ENCODE measurements at regions of chr15 and their contacts with region 1.

Region 1: DNA sequence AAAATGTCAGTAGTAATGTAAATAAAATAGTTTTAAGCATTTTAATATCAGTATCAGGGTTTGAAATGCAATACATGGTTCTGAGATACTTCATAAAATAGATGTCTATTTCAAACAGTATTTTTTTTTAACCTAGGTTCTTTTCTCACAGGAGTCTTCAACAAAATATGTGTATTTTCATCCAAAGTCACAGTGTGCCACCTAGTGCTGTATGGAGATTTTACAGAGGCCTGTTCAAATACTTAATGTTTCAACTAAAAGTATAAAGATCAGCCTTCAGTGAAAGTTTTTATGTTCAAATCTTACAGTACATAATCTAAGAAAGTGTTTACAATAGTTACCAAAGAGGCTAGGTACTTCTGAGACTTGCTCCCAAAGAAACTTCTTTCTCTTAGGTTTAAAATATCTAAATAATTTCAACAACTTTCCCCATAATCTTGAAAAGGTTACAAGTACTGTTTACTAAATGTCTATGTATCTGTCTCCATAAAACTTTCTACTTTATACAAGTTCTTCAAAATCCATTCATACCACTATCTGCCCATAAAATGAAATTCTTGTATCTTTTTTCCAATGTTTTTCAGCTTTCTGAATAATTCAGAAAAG is 38.3 kb downstream of the SCAPER start:
- DNase-seq: peak; percentile 58
- ATAC-seq: peak; percentile 82
- H3K4me3 ChIP-seq: no peak overlapping the region
- H3K27ac ChIP-seq: no peak overlapping the region
- H3K4me1 ChIP-seq: no peaks in the 10 kb centered on the region
- H3K27me3 ChIP-seq: no peaks in the 10 kb centered on the region
- CTCF ChIP-seq: peak; percentile 76
- POLR2A ChIP-seq: no peak
- RAD21 ChIP-seq: peak; percentile 81

Region 2: DNA sequence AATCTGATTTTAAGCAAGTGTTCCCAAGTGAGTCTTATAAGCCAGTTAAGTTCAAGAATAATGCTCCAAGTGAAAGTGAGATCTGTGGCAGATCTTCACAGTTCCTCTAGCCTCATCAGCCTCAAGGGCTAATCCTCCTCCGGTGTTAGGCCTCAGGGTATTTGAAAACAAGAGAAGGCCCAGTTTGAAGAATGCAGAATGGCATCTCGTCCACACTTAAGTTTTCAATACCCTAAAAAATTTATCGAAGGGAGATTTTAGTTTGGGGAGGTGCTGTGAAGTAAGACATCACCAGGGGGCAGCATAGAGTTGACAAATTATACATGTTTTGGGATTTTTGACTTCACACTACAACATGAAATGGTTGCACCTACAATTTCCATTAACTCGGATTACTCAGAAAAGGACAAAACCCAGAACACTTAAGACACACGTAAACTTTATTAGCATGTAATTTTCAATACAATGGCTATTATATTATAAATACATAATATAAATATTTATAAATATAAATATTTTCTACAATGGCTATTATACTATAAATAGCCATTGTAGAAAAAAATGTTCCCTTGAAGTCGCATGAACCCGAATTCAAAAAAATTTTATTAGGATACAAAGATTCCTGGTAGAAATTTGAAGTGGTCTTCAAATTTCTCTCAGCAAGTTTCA is 809.4 kb before region 1 on chr15:
- CTCF ChIA-PET with region 1: no interaction called
- POLR2A ChIA-PET with region 1: no interaction called
- dilution Hi-C with region 1: no loop called
- in situ Hi-C with region 1: no loop called
- intact Hi-C with region 1: loop called (anchors 5 kb)
- DNase-seq: peak; percentile 22
- ATAC-seq: 0 out of 2 replicates have a peak, but pooled peaks have one; percentile 19
- H3K4me3 ChIP-seq: peak overlapping the region; percentile 23; the same call in 1 of the 2 replicates
- H3K27ac ChIP-seq: no peak overlapping the region
- H3K4me1 ChIP-seq: peaks cover 1% of the 10 kb centered on the region; the same call in 1 of the 2 replicates
- H3K27me3 ChIP-seq: peaks cover 47% of the 10 kb centered on the region
- CTCF ChIP-seq: peak; percentile 70
- POLR2A ChIP-seq: no peak
- RAD21 ChIP-seq: peak; percentile 49

Region 3: GRCh38 chr15:76190834-76191538 is 675.8 kb before region 1 on chr15:
- CTCF ChIA-PET with region 1: interaction called, 5 read pairs
- POLR2A ChIA-PET with region 1: no interaction called
- dilution Hi-C with region 1: no loop called
- in situ Hi-C with region 1: loop called (anchors 10 kb)
- intact Hi-C with region 1: loop called (anchors 1 kb)
- DNase-seq: peak; percentile 62
- ATAC-seq: peak; percentile 95
- H3K4me3 ChIP-seq: peak overlapping the region; percentile 14; the same call in 1 of the 2 replicates
- H3K27ac ChIP-seq: no peak overlapping the region
- H3K4me1 ChIP-seq: peaks cover 9% of the 10 kb centered on the region
- H3K27me3 ChIP-seq: no peaks in the 10 kb centered on the region; the same call in 1 of the 2 replicates
- CTCF ChIP-seq: peak; percentile 92
- POLR2A ChIP-seq: no peak
- RAD21 ChIP-seq: peak; percentile 93

Region 4: DNA sequence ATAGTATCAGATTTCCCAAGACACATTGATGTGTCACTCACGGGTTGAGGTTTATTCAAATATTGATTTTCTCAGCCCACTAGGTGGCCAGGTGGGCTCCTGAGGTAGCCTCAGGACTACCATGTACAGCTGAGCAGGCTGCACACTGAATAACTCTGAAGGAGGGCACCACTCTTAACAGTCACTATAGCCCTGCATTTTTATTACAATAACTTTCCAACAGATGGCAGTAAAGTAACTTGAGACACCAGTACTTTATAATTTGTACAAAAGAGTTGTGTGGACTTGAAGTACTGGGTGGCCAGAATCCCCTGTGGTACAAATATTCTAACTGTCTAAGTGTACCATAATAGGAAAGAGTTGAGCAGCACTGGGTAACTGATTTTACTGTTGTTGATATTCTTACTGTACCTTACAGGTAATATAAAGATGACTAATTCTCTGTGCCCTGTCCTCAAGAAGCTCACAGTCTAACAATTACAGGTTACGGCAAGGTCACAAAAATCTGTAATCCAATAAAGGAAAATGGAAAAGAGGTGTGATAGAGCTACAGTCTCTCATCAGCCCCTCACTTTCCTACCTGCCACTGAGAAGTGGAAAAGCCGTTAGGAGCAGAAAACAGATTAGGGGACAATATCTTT is 631.5 kb before region 1 on chr15:
- CTCF ChIA-PET with region 1: no interaction called
- POLR2A ChIA-PET with region 1: no interaction called
- dilution Hi-C with region 1: no loop called
- in situ Hi-C with region 1: loop called (anchors 10 kb)
- intact Hi-C with region 1: loop called (anchors 1 kb)
- DNase-seq: peak; percentile 53
- ATAC-seq: peak; percentile 92
- H3K4me3 ChIP-seq: no peak overlapping the region
- H3K27ac ChIP-seq: no peak overlapping the region
- H3K4me1 ChIP-seq: no peaks in the 10 kb centered on the region; the same call in 1 of the 2 replicates
- H3K27me3 ChIP-seq: no peaks in the 10 kb centered on the region
- CTCF ChIP-seq: peak; percentile 60
- POLR2A ChIP-seq: no peak
- RAD21 ChIP-seq: peak; percentile 62

Region 5: DNA sequence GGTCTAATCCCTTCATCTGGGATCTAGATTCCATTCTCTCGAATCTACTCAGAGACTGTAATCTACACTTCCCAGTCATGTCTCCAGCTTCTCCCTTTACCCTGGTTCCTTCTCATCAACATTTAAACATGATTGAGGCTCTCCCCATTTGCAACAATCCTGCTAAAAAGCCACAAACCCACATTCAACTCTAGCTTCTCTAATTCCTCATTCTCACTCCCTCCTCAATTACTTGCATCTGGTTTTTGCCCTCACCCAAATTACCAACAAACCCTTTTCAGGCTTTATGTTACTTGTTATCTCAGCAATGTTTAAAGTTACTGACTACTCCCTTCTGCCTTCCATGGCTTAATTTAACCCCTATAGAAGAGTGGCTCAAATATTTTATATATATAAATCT is 567.0 kb before region 1 on chr15:
- CTCF ChIA-PET with region 1: no interaction called
- POLR2A ChIA-PET with region 1: no interaction called
- dilution Hi-C with region 1: no loop called
- in situ Hi-C with region 1: no loop called
- intact Hi-C with region 1: loop called (anchors 5 kb)
- DNase-seq: no peak
- ATAC-seq: no peak
- H3K4me3 ChIP-seq: no peak overlapping the region
- H3K27ac ChIP-seq: no peak overlapping the region
- H3K4me1 ChIP-seq: no peaks in the 10 kb centered on the region
- H3K27me3 ChIP-seq: no peaks in the 10 kb centered on the region
- CTCF ChIP-seq: no peak
- POLR2A ChIP-seq: no peak
- RAD21 ChIP-seq: no peak

Region 6: GRCh38 chr15:76345880-76346668 is 520.7 kb before region 1 on chr15:
- CTCF ChIA-PET with region 1: no interaction called
- POLR2A ChIA-PET with region 1: no interaction called
- dilution Hi-C with region 1: no loop called
- in situ Hi-C with region 1: no loop called
- intact Hi-C with region 1: loop called (anchors 5 kb)
- DNase-seq: no peak
- ATAC-seq: peak; percentile 21
- H3K4me3 ChIP-seq: peak overlapping the region; percentile 32
- H3K27ac ChIP-seq: no peak overlapping the region
- H3K4me1 ChIP-seq: peaks cover 4% of the 10 kb centered on the region
- H3K27me3 ChIP-seq: peaks cover 15% of the 10 kb centered on the region
- CTCF ChIP-seq: no peak
- POLR2A ChIP-seq: no peak
- RAD21 ChIP-seq: no peak